Posterior vena cava (tissue), 2 donors: ENCODE measurements at regions of chr18 and their contacts with region 1.

Region 1: DNA sequence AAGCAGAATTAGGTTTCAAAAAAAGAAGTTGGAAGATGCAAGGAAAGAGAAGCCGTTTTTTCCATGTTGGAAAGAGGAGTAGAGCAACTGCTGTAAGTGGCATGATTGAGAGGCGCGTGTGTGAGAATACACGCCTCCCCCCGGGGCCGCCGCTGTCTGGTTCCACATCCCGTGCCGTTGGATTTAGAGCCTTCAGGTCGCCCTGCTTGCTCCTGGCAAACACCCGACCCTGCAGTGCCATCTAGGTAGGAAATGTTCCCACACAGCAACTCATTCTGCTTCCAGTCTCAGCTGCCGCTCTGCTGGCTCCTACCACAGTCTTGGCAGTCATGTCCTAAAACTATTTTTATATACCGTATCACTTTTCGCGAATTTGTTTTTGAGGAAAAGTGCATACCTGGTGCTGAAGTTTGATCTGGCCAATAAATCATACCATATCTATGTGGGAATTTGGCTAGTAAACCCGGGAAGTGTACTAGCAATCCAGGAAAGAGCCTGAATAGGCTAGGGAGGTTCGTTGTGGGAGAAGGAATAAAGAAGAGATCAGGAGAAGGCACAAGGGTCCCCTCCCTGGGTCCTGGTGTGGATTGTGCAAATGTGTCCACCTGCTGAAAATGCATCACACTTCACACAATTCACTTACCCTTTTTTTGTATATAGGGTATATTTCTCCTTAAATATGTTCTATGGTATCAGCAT is 372.7 kb downstream of the FBXO15 start:
- DNase-seq: no peak

Region 2: DNA sequence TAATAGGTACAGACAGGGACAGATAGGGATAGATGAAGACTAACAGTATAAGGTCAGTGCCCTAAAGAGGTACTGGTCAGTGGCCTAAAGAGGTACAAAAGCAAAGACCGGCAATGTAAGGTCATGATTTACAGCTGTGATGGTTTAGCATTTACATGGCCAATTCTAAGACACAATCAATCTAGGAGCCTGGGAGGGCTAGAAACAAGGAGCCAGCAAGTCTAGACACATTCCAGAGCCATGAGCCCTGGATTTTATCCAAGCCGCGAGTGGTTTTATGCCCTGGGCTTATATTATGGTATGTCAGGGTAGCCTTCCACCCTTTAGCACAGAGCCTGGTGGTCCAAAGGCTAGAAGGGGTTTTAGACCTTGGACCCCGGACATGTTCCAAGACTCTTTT is 1355.0 kb before region 1 on chr18:
- intact Hi-C with region 1: loop called in 1 of 2 experiments (anchors 5 kb)
- DNase-seq: no peak

Region 3: GRCh38 chr18:73741946-73742345 is 33.0 kb before region 1 on chr18:
- intact Hi-C with region 1: no loop called
- DNase-seq: no peak